ENCODE measurements at regions of chr17 and their contacts with region 1.

Region 1: GRCh38 chr17:7177954-7178477 is 1.2 kb downstream of the ASGR1 start:
- DNase-seq: peak; percentile 42 to 43
- H3K4me3 ChIP-seq: peak overlapping the region; percentile 43
- H3K4me3 Mint-ChIP-seq: no peak overlapping the region
- H3K27ac Mint-ChIP-seq: peak overlapping the region; percentile 60
- H3K4me1 ChIP-seq: no peaks in the 10 kb centered on the region
- H3K4me1 Mint-ChIP-seq: no peaks in the 10 kb centered on the region
- H3K27me3 ChIP-seq: no peaks in the 10 kb centered on the region
- H3K27me3 Mint-ChIP-seq: no peaks in the 10 kb centered on the region
- CTCF ChIP-seq: no peak

Region 2: GRCh38 chr17:7136266-7136877 is 41.6 kb before region 1 on chr17:
- CTCF ChIA-PET with region 1: no interaction called
- POLR2A ChIA-PET with region 1: no interaction called
- intact Hi-C with region 1: loop called (anchors 2 kb)
- DNase-seq: peak; percentile 54 to 59
- H3K4me3 ChIP-seq: peak overlapping the region; percentile 17
- H3K4me3 Mint-ChIP-seq: peak overlapping the region; percentile 63
- H3K27ac Mint-ChIP-seq: no peak overlapping the region
- H3K4me1 ChIP-seq: peaks cover 3% of the 10 kb centered on the region
- H3K4me1 Mint-ChIP-seq: peaks cover 4% of the 10 kb centered on the region
- H3K27me3 ChIP-seq: no peaks in the 10 kb centered on the region
- H3K27me3 Mint-ChIP-seq: no peaks in the 10 kb centered on the region
- CTCF ChIP-seq: peak; percentile 60 to 70

Region 3: GRCh38 chr17:7147772-7148171 is 30.2 kb before region 1 on chr17:
- CTCF ChIA-PET with region 1: no interaction called
- POLR2A ChIA-PET with region 1: no interaction called
- intact Hi-C with region 1: no loop called
- DNase-seq: no peak
- H3K4me3 ChIP-seq: no peak overlapping the region
- H3K4me3 Mint-ChIP-seq: no peak overlapping the region
- H3K27ac Mint-ChIP-seq: no peak overlapping the region
- H3K4me1 ChIP-seq: no peaks in the 10 kb centered on the region
- H3K4me1 Mint-ChIP-seq: no peaks in the 10 kb centered on the region
- H3K27me3 ChIP-seq: no peaks in the 10 kb centered on the region
- H3K27me3 Mint-ChIP-seq: no peaks in the 10 kb centered on the region
- CTCF ChIP-seq: no peak

Region 4: DNA sequence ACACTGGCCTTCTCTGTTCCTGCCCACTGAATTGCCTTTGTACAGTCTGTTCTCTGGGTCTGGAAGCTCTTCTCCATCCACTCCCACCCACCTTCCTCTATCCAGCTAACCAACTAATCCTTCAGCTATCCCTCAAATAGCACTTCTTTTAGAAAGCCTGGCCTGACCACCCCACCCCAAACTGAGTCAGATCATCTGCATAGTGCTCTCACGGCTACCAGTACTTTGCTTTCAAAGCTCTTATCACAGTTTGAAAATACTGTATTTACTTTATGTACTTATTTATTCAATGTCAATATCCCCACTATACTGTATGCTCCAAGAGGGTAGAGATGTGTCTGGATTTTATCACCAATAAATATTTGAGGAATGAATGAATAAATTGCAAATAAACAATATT is 88.8 kb after region 1 on chr17:
- CTCF ChIA-PET with region 1: no interaction called
- POLR2A ChIA-PET with region 1: no interaction called
- intact Hi-C with region 1: no loop called
- DNase-seq: no peak
- H3K4me3 ChIP-seq: no peak overlapping the region
- H3K4me3 Mint-ChIP-seq: no peak overlapping the region
- H3K27ac Mint-ChIP-seq: no peak overlapping the region
- H3K4me1 ChIP-seq: peaks cover 5% of the 10 kb centered on the region; the same call in 1 of the 2 replicates
- H3K4me1 Mint-ChIP-seq: peaks cover 9% of the 10 kb centered on the region
- H3K27me3 ChIP-seq: no peaks in the 10 kb centered on the region
- H3K27me3 Mint-ChIP-seq: no peaks in the 10 kb centered on the region
- CTCF ChIP-seq: no peak

Measured in Caco-2 (cell line).